Stomach (tissue), 19 donors: ENCODE measurements at regions of chr7 and their contacts with region 1.

Region 1: DNA sequence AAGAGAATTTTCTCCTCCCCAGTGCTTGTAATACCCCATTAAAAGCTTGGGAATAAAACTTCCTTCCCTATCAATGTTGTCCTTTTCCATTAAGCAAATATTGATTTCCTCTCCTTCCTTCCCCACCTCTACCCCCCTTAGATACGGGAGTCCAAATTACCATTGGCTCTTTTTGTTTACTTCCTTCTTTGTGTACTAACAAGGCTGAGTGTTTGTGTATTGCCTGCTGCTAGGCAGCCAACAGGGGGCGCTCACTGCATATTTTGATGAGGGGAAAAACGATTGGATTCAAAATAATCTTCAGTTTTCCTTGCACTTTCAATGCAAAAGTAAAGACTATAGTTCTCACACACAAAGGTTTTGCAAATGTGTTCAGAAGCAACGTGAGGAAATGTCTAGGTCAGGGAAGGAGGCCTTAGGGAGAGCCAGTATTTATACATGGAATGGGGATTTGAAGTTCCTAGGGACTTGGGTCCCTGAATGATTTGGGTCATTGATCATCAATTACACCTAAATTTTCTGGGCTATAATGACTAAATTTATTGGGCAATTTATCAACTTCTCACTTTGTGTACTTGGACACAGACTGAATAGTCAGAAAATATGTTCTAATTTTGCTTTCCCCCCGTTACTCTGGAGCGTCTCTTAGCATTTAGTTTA is 23.6 kb upstream of the VPS41 start:
- DNase-seq: peak; percentile 64 to 83
- H3K4me3 ChIP-seq: no peak overlapping the region
- H3K27ac ChIP-seq: no peak overlapping the region
- H3K4me1 ChIP-seq: peaks cover 0 to 6% (median 0%) of the 10 kb centered on the region in 4 donors
- H3K27me3 ChIP-seq: no peaks in the 10 kb centered on the region
- CTCF ChIP-seq: peak in 5 of 7 experiments; percentile 65 to 77 (median 71)
- EP300 ChIP-seq: no peak
- POLR2A ChIP-seq: no peak

Region 2: GRCh38 chr7:39465055-39465929 is 532.7 kb after region 1 on chr7:
- intact Hi-C with region 1: loop called (anchors 5 kb)
- DNase-seq: peak; percentile 48 to 88
- H3K4me3 ChIP-seq: peak overlapping the region in 2 of 4 donors; percentile 3 to 13
- H3K27ac ChIP-seq: no peak overlapping the region
- H3K4me1 ChIP-seq: peaks cover 0 to 11% (median 3%) of the 10 kb centered on the region in 4 donors
- H3K27me3 ChIP-seq: peaks cover 0 to 5% (median 0%) of the 10 kb centered on the region in 3 donors
- CTCF ChIP-seq: peak in 5 of 7 experiments; percentile 62 to 90 (median 68)
- EP300 ChIP-seq: no peak
- POLR2A ChIP-seq: no peak